CD4-positive, alpha-beta memory T cell (primary cell): ENCODE measurements at regions of chr15 and their contacts with region 1.

Region 1: GRCh38 chr15:44728576-44729407 is 7.5 kb upstream of the TRIM69 start:
- DNase-seq: peak; percentile 95 to 98 (median 97)
- H3K4me3 ChIP-seq: peak overlapping the region; percentile 74 to 99
- H3K4me3 Mint-ChIP-seq: peak overlapping the region; percentile 96 to 100 (median 99)
- H3K27ac ChIP-seq: peak overlapping the region; percentile 98
- H3K27ac Mint-ChIP-seq: peak overlapping the region; percentile 96 to 100 (median 99)
- H3K4me1 ChIP-seq: peaks cover 79% of the 10 kb centered on the region
- H3K4me1 Mint-ChIP-seq: peaks cover 47 to 91% (median 63%) of the 10 kb centered on the region in 4 donors
- H3K27me3 ChIP-seq: no peaks in the 10 kb centered on the region
- H3K27me3 Mint-ChIP-seq: no peaks in the 10 kb centered on the region

Region 2: DNA sequence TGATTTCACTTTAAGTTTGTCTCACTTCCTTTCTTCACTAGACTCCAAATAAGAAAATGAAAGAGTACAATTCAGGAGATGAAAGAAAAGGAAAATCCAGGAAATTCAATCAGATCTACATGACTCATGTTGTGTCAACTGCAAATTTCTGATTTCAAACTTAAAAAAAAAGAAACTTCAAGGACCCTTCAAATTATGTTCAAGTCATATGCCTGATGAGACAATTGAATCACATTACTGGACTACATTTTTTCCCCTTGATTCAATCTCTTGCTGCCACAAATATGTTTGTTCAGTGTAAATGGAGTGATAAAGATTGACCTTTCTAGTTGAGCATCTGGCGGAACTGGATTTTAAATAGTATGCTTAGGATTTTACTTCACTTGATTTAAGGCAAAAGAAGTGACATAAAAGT is 571.1 kb before region 1 on chr15:
- CTCF ChIA-PET with region 1: no interaction called
- POLR2A ChIA-PET with region 1: no interaction called
- intact Hi-C with region 1: no loop called
- DNase-seq: no peak
- H3K4me3 ChIP-seq: no peak overlapping the region
- H3K4me3 Mint-ChIP-seq: no peak overlapping the region
- H3K27ac ChIP-seq: no peak overlapping the region
- H3K27ac Mint-ChIP-seq: no peak overlapping the region
- H3K4me1 ChIP-seq: no peaks in the 10 kb centered on the region
- H3K4me1 Mint-ChIP-seq: no peaks in the 10 kb centered on the region
- H3K27me3 ChIP-seq: no peaks in the 10 kb centered on the region
- H3K27me3 Mint-ChIP-seq: peaks cover 11 to 17% of the 10 kb centered on the region in 2 donors

Region 3: DNA sequence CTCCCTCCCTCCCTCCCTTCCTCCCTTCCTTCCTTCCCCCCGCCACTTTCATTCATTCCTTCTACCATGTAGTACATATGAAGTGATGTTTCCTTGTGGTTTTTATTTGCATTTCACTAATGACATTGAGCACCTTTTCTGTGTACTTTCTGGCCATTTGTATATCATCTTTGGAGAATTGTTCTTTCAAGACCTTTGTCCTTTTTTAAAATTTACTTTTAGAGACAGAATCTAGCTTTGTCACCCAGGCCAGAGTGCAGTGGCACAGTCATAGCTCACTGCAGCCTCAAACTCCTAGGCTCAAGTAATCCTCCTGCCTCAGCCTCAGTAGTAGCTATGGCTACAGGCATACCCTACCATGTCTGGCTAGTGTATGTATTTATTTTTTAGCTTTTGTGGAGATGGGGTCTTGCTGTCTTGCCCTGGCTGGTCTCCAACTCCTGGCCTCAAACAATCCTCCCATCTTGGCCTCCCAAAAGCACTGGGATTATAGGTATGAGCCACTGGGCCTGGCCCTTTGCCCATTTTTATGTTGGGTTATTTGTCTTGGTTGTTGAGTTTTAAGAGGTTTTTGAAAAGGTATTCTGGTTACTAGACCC is 343.3 kb before region 1 on chr15:
- CTCF ChIA-PET with region 1: no interaction called
- POLR2A ChIA-PET with region 1: no interaction called
- intact Hi-C with region 1: no loop called
- DNase-seq: no peak
- H3K4me3 ChIP-seq: no peak overlapping the region
- H3K4me3 Mint-ChIP-seq: no peak overlapping the region
- H3K27ac ChIP-seq: no peak overlapping the region
- H3K27ac Mint-ChIP-seq: no peak overlapping the region
- H3K4me1 ChIP-seq: no peaks in the 10 kb centered on the region
- H3K4me1 Mint-ChIP-seq: peaks cover 0 to 2% (median under 1%) of the 10 kb centered on the region in 4 donors
- H3K27me3 ChIP-seq: no peaks in the 10 kb centered on the region
- H3K27me3 Mint-ChIP-seq: no peaks in the 10 kb centered on the region

Region 4: GRCh38 chr15:44519537-44519936 is 209.3 kb before region 1 on chr15:
- CTCF ChIA-PET with region 1: no interaction called
- POLR2A ChIA-PET with region 1: no interaction called
- intact Hi-C with region 1: no loop called
- DNase-seq: no peak
- H3K4me3 ChIP-seq: no peak overlapping the region
- H3K4me3 Mint-ChIP-seq: no peak overlapping the region
- H3K27ac ChIP-seq: no peak overlapping the region
- H3K27ac Mint-ChIP-seq: peak overlapping the region in 5 of 7 donors; percentile 32 to 68 (median 36)
- H3K4me1 ChIP-seq: no peaks in the 10 kb centered on the region
- H3K4me1 Mint-ChIP-seq: peaks cover 0 to 5% (median 2%) of the 10 kb centered on the region in 4 donors
- H3K27me3 ChIP-seq: no peaks in the 10 kb centered on the region
- H3K27me3 Mint-ChIP-seq: no peaks in the 10 kb centered on the region

Region 5: DNA sequence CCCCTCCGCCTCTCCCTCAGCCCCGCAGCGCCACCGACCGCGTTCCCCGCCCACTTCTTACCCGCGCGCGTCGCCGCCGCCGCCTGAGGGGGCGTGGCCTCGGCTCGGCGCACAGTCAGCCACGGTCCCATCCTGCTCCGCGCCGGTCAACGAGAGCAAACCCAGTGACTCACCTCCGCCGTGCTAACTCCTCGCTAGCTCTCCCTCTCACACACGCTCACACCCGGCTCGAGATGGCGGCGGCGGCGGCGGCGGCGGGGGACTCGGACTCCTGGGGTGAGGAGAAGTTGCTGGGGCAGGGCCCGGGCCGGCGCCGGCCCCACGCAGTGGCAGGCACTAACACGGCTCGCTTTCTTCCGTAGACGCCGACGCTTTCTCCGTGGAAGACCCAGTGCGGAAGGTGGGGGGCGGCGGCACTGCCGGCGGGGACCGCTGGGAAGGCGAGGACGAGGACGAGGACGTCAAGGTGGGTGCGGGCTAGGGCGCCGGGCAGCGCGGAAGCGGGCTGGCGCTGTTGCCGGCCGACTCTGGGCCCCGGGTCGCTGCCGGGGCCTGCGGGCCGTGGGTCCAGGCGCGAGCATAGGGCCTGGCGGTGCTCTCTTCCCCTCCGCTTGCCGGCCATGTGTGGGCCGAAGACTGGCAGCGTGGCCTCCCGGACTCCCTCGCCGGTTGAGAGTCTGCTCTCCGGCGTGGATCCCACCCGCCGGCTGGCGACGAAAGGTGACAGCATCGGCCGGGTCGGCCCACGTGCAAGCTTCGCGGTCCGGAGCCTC is 191.6 kb before region 1 on chr15 and contains the start of gene EIF3J:
- CTCF ChIA-PET with region 1: no interaction called
- POLR2A ChIA-PET with region 1: interaction called, 3 read pairs
- intact Hi-C with region 1: loop called (anchors 5 kb)
- DNase-seq: peak; percentile 94 to 96 (median 96)
- H3K4me3 ChIP-seq: peak within 1 kb of the TSS; percentile 71 to 90
- H3K4me3 Mint-ChIP-seq: peak within 1 kb of the TSS; percentile 83 to 96 (median 92)
- H3K27ac ChIP-seq: peak within 1 kb of the TSS; percentile 91
- H3K27ac Mint-ChIP-seq: peak within 1 kb of the TSS; percentile 88 to 97 (median 96)
- H3K4me1 ChIP-seq: peaks cover 48% of the 10 kb centered on the region
- H3K4me1 Mint-ChIP-seq: peaks cover 36 to 68% (median 48%) of the 10 kb centered on the region in 4 donors
- H3K27me3 ChIP-seq: no peaks in the 10 kb centered on the region
- H3K27me3 Mint-ChIP-seq: no peaks in the 10 kb centered on the region
- total RNA-seq, gene EIF3J: 65.0 to 76.8 TPM

Region 6: DNA sequence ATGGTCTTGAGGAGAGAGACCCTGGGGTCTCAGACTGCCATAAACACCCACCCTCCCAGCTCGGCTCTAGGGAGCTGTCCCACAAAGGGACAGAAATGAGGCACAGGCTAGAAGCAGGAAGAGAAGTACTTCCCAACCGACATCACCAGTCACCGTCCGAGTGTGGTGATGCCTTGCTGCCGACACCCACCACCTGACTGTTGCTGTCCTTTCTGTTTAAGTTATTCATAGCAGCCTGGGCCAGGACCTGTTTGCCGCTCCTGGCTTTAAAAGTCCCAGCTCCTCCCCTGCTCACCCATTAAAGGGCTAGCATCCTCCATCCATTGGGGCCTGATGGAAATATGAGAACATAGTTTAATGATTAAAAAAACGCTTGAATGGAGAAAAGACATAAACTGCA is 52.1 kb before region 1 on chr15:
- CTCF ChIA-PET with region 1: interaction called, 11 read pairs
- POLR2A ChIA-PET with region 1: interaction called, 5,737 read pairs
- intact Hi-C with region 1: no loop called
- DNase-seq: peak in 1 of 5 donors; percentile 22
- H3K4me3 ChIP-seq: peak overlapping the region; percentile 10 to 23
- H3K4me3 Mint-ChIP-seq: peak overlapping the region; percentile 45 to 88 (median 82)
- H3K27ac ChIP-seq: peak overlapping the region; percentile 39
- H3K27ac Mint-ChIP-seq: peak overlapping the region; percentile 87 to 97 (median 95)
- H3K4me1 ChIP-seq: peaks cover 100% of the 10 kb centered on the region
- H3K4me1 Mint-ChIP-seq: peaks cover 67 to 95% (median 86%) of the 10 kb centered on the region in 4 donors
- H3K27me3 ChIP-seq: no peaks in the 10 kb centered on the region
- H3K27me3 Mint-ChIP-seq: no peaks in the 10 kb centered on the region

Region 7: GRCh38 chr15:44682211-44682610 is 46.6 kb before region 1 on chr15:
- CTCF ChIA-PET with region 1: interaction called, 11 read pairs
- POLR2A ChIA-PET with region 1: interaction called, 5,737 read pairs
- intact Hi-C with region 1: loop called (anchors 1 kb)
- DNase-seq: no peak
- H3K4me3 ChIP-seq: peak overlapping the region in 1 of 2 donors; percentile 13
- H3K4me3 Mint-ChIP-seq: peak overlapping the region in 7 of 8 donors; percentile 64 to 82 (median 75)
- H3K27ac ChIP-seq: peak overlapping the region; percentile 70
- H3K27ac Mint-ChIP-seq: peak overlapping the region; percentile 86 to 96 (median 93)
- H3K4me1 ChIP-seq: peaks cover 75% of the 10 kb centered on the region
- H3K4me1 Mint-ChIP-seq: peaks cover 66 to 99% (median 83%) of the 10 kb centered on the region in 4 donors
- H3K27me3 ChIP-seq: no peaks in the 10 kb centered on the region
- H3K27me3 Mint-ChIP-seq: no peaks in the 10 kb centered on the region